ENCODE measurements at regions of chr4 and their contacts with region 1.

Region 1: DNA sequence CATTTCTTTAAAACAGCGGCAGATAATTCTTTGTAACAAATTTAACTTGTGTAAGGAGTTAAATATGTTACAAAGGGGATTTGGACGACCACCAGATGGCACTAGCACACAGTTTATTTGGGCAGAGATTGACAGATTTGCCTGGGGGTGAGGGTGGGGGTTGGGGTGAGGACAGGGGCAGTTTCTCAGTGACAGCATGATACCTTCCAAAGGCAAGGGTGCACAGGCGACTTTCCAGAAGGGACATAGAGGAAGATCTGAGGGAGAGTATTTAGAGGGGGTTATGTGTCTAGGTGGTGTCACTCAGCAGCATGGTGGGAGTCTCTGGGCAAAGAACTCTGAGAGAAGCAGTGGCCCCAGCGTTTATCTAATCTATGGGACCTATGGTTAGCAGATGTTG is 9.6 kb upstream of the TMA16 start:
- H3K4me3 ChIP-seq: no peak overlapping the region
- H3K27ac ChIP-seq: no peak overlapping the region
- H3K4me1 ChIP-seq: no peaks in the 10 kb centered on the region
- CTCF ChIP-seq: peak; percentile 24; the same call in 1 of the 2 replicates

Region 2: DNA sequence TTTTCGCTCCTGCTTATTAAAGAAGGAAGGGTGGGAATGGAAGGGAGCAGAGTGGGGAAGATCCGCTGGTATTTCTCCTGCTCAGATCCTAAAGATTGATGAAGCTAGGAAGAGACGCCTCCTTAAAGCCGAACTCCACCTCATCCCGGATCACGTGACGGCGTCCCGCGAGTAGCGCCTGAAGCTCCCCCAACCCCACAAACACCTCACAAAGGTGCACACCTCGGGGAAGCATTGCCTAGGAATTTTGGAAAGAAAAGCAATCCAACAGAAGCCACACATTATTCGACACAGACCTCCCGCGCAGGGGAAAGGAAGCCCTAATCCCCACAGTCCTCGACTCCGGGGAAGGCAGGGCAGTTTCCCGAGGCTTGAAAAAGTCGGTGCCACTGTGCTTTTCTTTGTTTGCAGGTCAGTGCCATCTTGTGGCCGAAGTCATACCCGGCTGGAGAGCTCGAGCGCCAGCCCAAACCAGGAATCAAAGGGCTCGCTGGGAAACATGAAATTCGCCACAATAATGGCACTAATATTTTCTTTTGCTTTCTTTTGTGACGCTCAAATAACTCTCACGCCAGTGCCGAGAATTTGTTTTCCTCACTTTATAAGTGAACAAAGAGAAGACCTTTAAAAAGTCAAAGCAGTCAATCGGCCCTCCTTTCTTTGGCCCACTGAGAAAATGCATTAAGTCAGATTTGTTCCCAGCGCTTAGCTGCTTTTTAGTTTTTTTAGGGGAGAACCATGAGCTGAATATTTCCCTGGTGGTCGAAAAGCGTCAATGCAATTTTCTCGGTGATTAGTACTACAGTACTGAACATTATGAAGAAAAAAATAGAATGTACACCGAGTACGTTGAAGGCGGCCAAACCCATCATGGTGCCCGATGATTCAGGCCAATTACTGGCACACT is 152.2 kb before region 1 on chr4 and contains the start of gene NPY1R:
- CTCF ChIA-PET with region 1: no interaction called
- POLR2A ChIA-PET with region 1: no interaction called
- H3K4me3 ChIP-seq: peak within 1 kb of the TSS; percentile 33
- H3K27ac ChIP-seq: no peak within 1 kb of the TSS
- H3K4me1 ChIP-seq: no peaks in the 10 kb centered on the region
- CTCF ChIP-seq: no peak

Region 3: GRCh38 chr4:163548481-163549243 is 63.8 kb after region 1 on chr4:
- CTCF ChIA-PET with region 1: interaction called, 43 read pairs
- POLR2A ChIA-PET with region 1: no interaction called
- H3K4me3 ChIP-seq: no peak overlapping the region
- H3K27ac ChIP-seq: no peak overlapping the region
- H3K4me1 ChIP-seq: no peaks in the 10 kb centered on the region
- CTCF ChIP-seq: 0 out of 2 replicates have a peak, but pooled peaks have one; percentile 22

Measured in HEK293 (cell line).